IMR-90 (cell line): ENCODE measurements at regions of chr15 and their contacts with region 1.

Region 1: DNA sequence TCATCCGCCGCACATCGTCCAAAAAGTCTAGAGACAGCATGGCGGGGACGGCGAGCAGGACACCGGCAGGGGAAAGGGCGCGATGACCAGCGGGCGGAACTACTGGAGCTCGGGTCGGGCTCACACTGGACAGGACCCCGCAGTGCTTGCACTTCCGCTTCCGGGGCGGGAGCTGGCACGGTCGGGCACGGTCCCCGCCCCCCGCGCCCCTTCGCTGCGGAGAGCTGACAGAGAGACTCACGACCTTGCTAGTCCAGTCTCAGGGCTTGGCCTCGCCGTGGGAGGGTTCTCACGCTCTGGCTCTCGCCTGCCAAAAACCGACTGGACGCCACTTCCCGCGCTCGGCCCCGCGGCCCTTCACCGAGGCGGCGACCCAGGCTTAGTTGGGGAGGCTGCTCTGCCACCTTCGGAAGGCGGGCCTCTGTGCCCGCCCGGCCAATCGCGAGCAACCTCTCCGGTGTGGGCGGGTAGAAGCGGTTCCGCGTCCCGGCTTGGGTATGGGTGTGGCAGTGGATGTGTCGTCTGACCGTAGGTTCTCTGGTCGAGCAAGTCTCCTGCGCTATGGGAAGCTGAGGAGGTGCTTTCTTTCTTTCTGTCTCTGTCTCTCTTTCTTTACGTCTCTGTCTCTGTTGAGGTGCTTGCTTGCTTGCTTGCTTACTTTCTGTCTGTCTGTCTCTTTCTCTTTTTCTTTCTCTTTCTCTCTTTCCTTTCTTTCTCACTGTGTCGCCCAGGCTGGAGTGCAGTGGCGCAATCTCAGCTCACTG is at the start of gene SEC11A:
- DNase-seq: peak; percentile 92
- ATAC-seq: peak; percentile 99
- H3K4me3 ChIP-seq: peak within 1 kb of the TSS; percentile 88
- H3K27ac ChIP-seq: peak within 1 kb of the TSS; percentile 98
- H3K4me1 ChIP-seq: peaks cover 2% of the 10 kb centered on the region; the same call in 1 of the 2 replicates
- H3K27me3 ChIP-seq: no peaks in the 10 kb centered on the region
- CTCF ChIP-seq: no peak
- POLR2A ChIP-seq: peak; percentile 74
- RAD21 ChIP-seq: peak; percentile 31
- total RNA-seq, gene SEC11A: 62.4 and 233 TPM in 2 replicates

Region 2: GRCh38 chr15:84648539-84648938 is 67.7 kb before region 1 on chr15:
- CTCF ChIA-PET with region 1: no interaction called
- POLR2A ChIA-PET with region 1: no interaction called
- dilution Hi-C with region 1: no loop called
- in situ Hi-C with region 1: no loop called
- intact Hi-C with region 1: no loop called
- DNase-seq: no peak
- ATAC-seq: no peak
- H3K4me3 ChIP-seq: no peak overlapping the region
- H3K27ac ChIP-seq: no peak overlapping the region
- H3K4me1 ChIP-seq: peaks cover 3% of the 10 kb centered on the region
- H3K27me3 ChIP-seq: no peaks in the 10 kb centered on the region
- CTCF ChIP-seq: no peak
- POLR2A ChIP-seq: no peak
- RAD21 ChIP-seq: no peak

Region 3: GRCh38 chr15:84671211-84671610 is 45.0 kb before region 1 on chr15:
- CTCF ChIA-PET with region 1: interaction called, 3 read pairs
- POLR2A ChIA-PET with region 1: no interaction called
- dilution Hi-C with region 1: no loop called
- in situ Hi-C with region 1: no loop called
- intact Hi-C with region 1: loop called (anchors 5 kb)
- DNase-seq: peak; percentile 87
- ATAC-seq: peak; percentile 81
- H3K4me3 ChIP-seq: no peak overlapping the region
- H3K27ac ChIP-seq: no peak overlapping the region; the same call in 1 of the 2 replicates
- H3K4me1 ChIP-seq: peaks cover 10% of the 10 kb centered on the region
- H3K27me3 ChIP-seq: no peaks in the 10 kb centered on the region
- CTCF ChIP-seq: no peak
- POLR2A ChIP-seq: no peak
- RAD21 ChIP-seq: no peak

Region 4: DNA sequence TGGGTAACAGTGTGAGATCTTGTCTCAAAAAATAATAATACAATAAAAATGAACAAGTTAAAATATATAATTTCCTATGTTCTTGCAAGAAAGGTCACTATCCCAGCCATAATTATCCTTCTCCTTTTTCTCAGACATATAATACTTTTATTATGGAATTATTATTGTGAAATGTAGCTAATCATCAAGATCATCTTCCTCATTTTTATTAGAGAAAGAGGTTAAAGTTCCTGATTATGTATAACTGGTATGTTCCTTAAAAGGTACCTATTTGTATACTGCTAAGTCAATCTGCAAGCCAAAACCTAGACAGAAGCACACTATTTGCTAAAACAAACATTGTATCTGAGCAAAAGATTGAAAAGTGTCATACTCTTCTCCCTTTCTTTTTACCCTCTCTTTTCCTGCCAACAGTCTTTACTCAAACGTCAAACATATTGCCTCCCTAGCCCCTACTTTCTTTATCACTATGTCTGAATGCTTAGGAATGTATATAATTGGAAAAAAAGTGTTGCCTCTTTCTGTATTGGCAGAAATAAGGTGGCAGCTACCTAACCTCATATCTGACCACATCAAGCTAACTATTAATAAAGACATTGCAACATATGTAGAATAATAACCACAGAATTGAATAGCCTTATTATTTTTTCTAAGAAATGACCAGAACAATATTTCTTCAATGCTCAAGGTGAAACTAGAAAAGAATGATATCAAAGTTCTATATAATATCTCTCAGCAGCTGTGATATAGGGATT is 18.8 kb before region 1 on chr15:
- CTCF ChIA-PET with region 1: no interaction called
- POLR2A ChIA-PET with region 1: no interaction called
- dilution Hi-C with region 1: no loop called
- in situ Hi-C with region 1: no loop called
- intact Hi-C with region 1: loop called (anchors 2 kb)
- DNase-seq: no peak
- ATAC-seq: no peak
- H3K4me3 ChIP-seq: no peak overlapping the region
- H3K27ac ChIP-seq: no peak overlapping the region
- H3K4me1 ChIP-seq: no peaks in the 10 kb centered on the region; the same call in 1 of the 2 replicates
- H3K27me3 ChIP-seq: no peaks in the 10 kb centered on the region
- CTCF ChIP-seq: no peak
- POLR2A ChIP-seq: no peak
- RAD21 ChIP-seq: no peak

Region 5: DNA sequence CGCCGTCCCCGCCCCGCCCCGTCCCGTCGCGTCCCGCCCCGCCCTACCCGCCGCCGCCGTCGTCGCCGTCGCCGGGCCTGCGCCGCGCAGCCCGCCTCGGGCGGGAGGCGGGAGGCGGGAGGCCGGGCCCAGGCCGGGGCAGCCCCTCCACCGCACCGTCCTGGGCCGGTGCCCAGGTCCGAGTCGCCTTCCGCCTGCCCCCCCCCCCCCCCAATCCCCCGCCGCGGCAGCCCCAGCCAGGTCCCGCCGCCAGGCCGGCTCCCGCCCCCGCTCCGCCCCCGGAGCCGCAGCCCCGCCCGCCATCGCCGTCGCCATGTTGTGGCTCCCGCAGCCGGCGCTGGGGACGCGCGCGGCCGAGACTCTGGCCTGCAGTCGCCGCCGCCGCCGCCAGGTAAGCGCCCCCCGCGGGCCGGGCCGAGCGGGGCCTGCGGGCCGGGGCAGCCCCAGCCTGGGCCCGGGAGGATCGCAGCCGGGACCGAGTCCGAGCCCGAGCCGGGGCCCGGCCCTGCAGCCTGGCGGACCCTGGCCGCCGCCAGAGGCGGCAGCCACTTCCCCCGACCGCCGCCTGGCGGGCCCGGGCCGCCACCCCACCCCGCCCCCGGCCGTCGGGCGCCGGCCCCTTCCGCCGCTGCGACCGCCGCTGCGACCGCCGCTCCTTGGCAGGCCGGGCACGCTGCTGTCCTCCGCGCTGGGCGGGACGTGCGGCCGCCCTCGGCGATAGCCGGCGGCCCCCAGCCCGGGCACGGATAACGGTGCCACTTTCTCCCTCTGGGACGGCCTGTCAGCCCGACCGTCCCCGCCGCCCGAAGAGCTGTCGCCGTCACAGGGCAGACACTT is 32.3 kb after region 1 on chr15 and contains the start of gene ZNF592:
- CTCF ChIA-PET with region 1: interaction called, 3 read pairs
- POLR2A ChIA-PET with region 1: no interaction called
- dilution Hi-C with region 1: no loop called
- in situ Hi-C with region 1: no loop called
- intact Hi-C with region 1: loop called (anchors 1 kb)
- DNase-seq: peak; percentile 70
- ATAC-seq: peak; percentile 85
- H3K4me3 ChIP-seq: peak within 1 kb of the TSS; percentile 99
- H3K27ac ChIP-seq: peak within 1 kb of the TSS; percentile 92
- H3K4me1 ChIP-seq: peaks cover 12% of the 10 kb centered on the region
- H3K27me3 ChIP-seq: no peaks in the 10 kb centered on the region
- CTCF ChIP-seq: peak; percentile 33
- POLR2A ChIP-seq: no peak
- RAD21 ChIP-seq: peak; percentile 22; the same call in 1 of the 2 replicates
- total RNA-seq, gene ZNF592: 4.2 and 4.3 TPM in 2 replicates

Region 6: GRCh38 chr15:84894442-84895361 is 178.5 kb after region 1 on chr15:
- CTCF ChIA-PET with region 1: no interaction called
- POLR2A ChIA-PET with region 1: no interaction called
- dilution Hi-C with region 1: no loop called
- in situ Hi-C with region 1: no loop called
- intact Hi-C with region 1: no loop called
- DNase-seq: no peak
- ATAC-seq: no peak
- H3K4me3 ChIP-seq: no peak overlapping the region
- H3K27ac ChIP-seq: no peak overlapping the region
- H3K4me1 ChIP-seq: no peaks in the 10 kb centered on the region
- H3K27me3 ChIP-seq: peaks cover 35% of the 10 kb centered on the region
- CTCF ChIP-seq: no peak
- POLR2A ChIP-seq: no peak
- RAD21 ChIP-seq: no peak

Region 7: GRCh38 chr15:84929744-84930371 is 213.6 kb after region 1 on chr15:
- CTCF ChIA-PET with region 1: interaction called, 3 read pairs
- POLR2A ChIA-PET with region 1: no interaction called
- dilution Hi-C with region 1: no loop called
- in situ Hi-C with region 1: no loop called
- intact Hi-C with region 1: loop called (anchors 1 kb)
- DNase-seq: peak; percentile 72
- ATAC-seq: no peak
- H3K4me3 ChIP-seq: no peak overlapping the region
- H3K27ac ChIP-seq: no peak overlapping the region
- H3K4me1 ChIP-seq: peaks cover 2% of the 10 kb centered on the region
- H3K27me3 ChIP-seq: no peaks in the 10 kb centered on the region
- CTCF ChIP-seq: no peak
- POLR2A ChIP-seq: no peak
- RAD21 ChIP-seq: no peak